CD14-positive monocyte (primary cell): ENCODE measurements at regions of chr10 and their contacts with region 1.

Region 1: GRCh38 chr10:60237977-60238758 is 151.5 kb downstream of the ANK3 start:
- DNase-seq: peak; percentile 23 to 55 (median 30)
- H3K4me3 ChIP-seq: peak overlapping the region in 1 of 3 experiments; percentile 53
- H3K4me3 Mint-ChIP-seq: no peak overlapping the region
- H3K27ac ChIP-seq: peak overlapping the region in 1 of 2 donors; percentile 98
- H3K27ac Mint-ChIP-seq: peak overlapping the region; percentile 15 to 83 (median 75)
- H3K4me1 ChIP-seq: peaks cover 27 to 28% of the 10 kb centered on the region in 2 donors
- H3K4me1 Mint-ChIP-seq: peaks cover 43% of the 10 kb centered on the region
- H3K27me3 ChIP-seq: no peaks in the 10 kb centered on the region
- H3K27me3 Mint-ChIP-seq: peaks cover 0 to 3% (median 0%) of the 10 kb centered on the region in 3 donors
- CTCF ChIP-seq: no peak

Region 2: DNA sequence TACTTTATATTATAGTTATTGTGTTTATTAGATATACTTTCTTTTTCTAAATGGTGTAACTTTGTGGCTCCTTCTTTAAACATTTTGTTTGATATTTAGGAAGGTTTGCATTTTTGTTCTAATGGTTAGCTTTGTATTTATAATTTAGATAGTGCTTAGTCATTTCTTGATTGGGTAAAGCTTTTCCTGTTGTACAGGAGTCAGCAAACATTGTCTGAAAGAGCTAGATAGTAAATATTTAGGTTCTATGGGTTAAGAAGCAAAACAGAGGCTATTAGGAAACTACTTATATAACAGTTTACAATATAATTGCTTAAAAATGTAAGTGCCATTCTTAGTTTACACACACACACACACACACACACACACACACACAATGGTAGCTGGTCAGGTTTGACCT is 261.3 kb before region 1 on chr10:
- intact Hi-C with region 1: no loop called
- DNase-seq: no peak
- H3K4me3 ChIP-seq: no peak overlapping the region
- H3K4me3 Mint-ChIP-seq: no peak overlapping the region
- H3K27ac ChIP-seq: no peak overlapping the region
- H3K27ac Mint-ChIP-seq: no peak overlapping the region
- H3K4me1 ChIP-seq: no peaks in the 10 kb centered on the region
- H3K4me1 Mint-ChIP-seq: peaks cover 4% of the 10 kb centered on the region
- H3K27me3 ChIP-seq: no peaks in the 10 kb centered on the region
- H3K27me3 Mint-ChIP-seq: peaks cover 0 to 3% (median 2%) of the 10 kb centered on the region in 3 donors
- CTCF ChIP-seq: no peak

Region 3: GRCh38 chr10:60148264-60148840 is 89.8 kb before region 1 on chr10:
- intact Hi-C with region 1: no loop called
- DNase-seq: no peak
- H3K4me3 ChIP-seq: no peak overlapping the region
- H3K4me3 Mint-ChIP-seq: no peak overlapping the region
- H3K27ac ChIP-seq: no peak overlapping the region
- H3K27ac Mint-ChIP-seq: no peak overlapping the region
- H3K4me1 ChIP-seq: no peaks in the 10 kb centered on the region
- H3K4me1 Mint-ChIP-seq: no peaks in the 10 kb centered on the region
- H3K27me3 ChIP-seq: no peaks in the 10 kb centered on the region
- H3K27me3 Mint-ChIP-seq: no peaks in the 10 kb centered on the region
- CTCF ChIP-seq: no peak

Region 4: GRCh38 chr10:60282771-60283353 is 44.7 kb after region 1 on chr10:
- intact Hi-C with region 1: loop called in 1 of 2 experiments (anchors 10 kb)
- DNase-seq: peak; percentile 37 to 89 (median 57)
- H3K4me3 ChIP-seq: no peak overlapping the region
- H3K4me3 Mint-ChIP-seq: peak overlapping the region in 1 of 2 donors; percentile 67
- H3K27ac ChIP-seq: no peak overlapping the region
- H3K27ac Mint-ChIP-seq: peak overlapping the region in 5 of 7 donors; percentile 54 to 90 (median 76)
- H3K4me1 ChIP-seq: peaks cover 0 to 5% of the 10 kb centered on the region in 2 donors
- H3K4me1 Mint-ChIP-seq: peaks cover 14% of the 10 kb centered on the region
- H3K27me3 ChIP-seq: no peaks in the 10 kb centered on the region
- H3K27me3 Mint-ChIP-seq: no peaks in the 10 kb centered on the region
- CTCF ChIP-seq: no peak

Region 5: GRCh38 chr10:60388709-60389301 is 150.6 kb after region 1 on chr10:
- intact Hi-C with region 1: no loop called
- DNase-seq: peak in 1 of 3 donors; percentile 15
- H3K4me3 ChIP-seq: no peak overlapping the region
- H3K4me3 Mint-ChIP-seq: no peak overlapping the region
- H3K27ac ChIP-seq: no peak overlapping the region
- H3K27ac Mint-ChIP-seq: peak overlapping the region in 1 of 7 donors; percentile 54
- H3K4me1 ChIP-seq: peaks cover 0 to 10% of the 10 kb centered on the region in 2 donors
- H3K4me1 Mint-ChIP-seq: peaks cover 7% of the 10 kb centered on the region
- H3K27me3 ChIP-seq: no peaks in the 10 kb centered on the region
- H3K27me3 Mint-ChIP-seq: peaks cover 2 to 4% (median 2%) of the 10 kb centered on the region in 3 donors
- CTCF ChIP-seq: no peak